ENCODE measurements at regions of chr1 and their contacts with region 1.

Region 1: GRCh38 chr1:196608390-196609369 is at the start of gene KCNT2:
- DNase-seq: peak in 1 of 2 experiments; percentile 15
- H3K4me3 ChIP-seq: no peak within 1 kb of the TSS; the same call in 1 of the 2 replicates
- H3K27ac ChIP-seq: no peak within 1 kb of the TSS
- H3K4me1 ChIP-seq: no peaks in the 10 kb centered on the region
- H3K27me3 ChIP-seq: no peaks in the 10 kb centered on the region
- CTCF ChIP-seq: no peak
- total RNA-seq, gene KCNT2: 0.53 and 0.90 TPM in 2 replicates

Region 2: DNA sequence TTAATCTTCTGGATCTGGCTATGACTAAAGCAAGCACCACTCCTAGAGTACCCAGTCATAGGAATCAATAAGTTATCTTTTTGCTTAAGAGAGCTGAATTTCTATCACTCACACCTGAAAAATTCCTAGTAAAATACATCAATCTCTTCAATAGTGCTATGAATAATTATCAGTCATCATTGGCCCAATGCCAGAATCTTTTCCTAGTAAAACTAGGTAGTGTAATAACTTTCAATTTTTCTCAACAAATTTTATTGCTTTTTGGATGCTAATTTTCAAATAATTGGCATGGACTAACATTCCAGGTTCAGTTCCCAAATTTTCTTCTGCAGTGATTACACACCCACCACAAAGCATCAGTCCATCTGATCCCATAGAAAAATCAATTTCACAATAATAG is 13.2 kb after region 1 on chr1:
- CTCF ChIA-PET with region 1: no interaction called
- POLR2A ChIA-PET with region 1: interaction called, 12 read pairs
- intact Hi-C with region 1: no loop called
- DNase-seq: no peak
- H3K4me3 ChIP-seq: no peak overlapping the region
- H3K27ac ChIP-seq: no peak overlapping the region
- H3K4me1 ChIP-seq: no peaks in the 10 kb centered on the region
- H3K27me3 ChIP-seq: no peaks in the 10 kb centered on the region
- CTCF ChIP-seq: no peak

Region 3: GRCh38 chr1:197775282-197776262 is 1166.9 kb after region 1 on chr1 and contains the start of gene DENND1B:
- CTCF ChIA-PET with region 1: no interaction called
- POLR2A ChIA-PET with region 1: no interaction called
- intact Hi-C with region 1: no loop called
- DNase-seq: peak; percentile 78 to 80
- H3K4me3 ChIP-seq: peak within 1 kb of the TSS; percentile 97
- H3K27ac ChIP-seq: peak within 1 kb of the TSS; percentile 95
- H3K4me1 ChIP-seq: peaks cover 48% of the 10 kb centered on the region
- H3K27me3 ChIP-seq: no peaks in the 10 kb centered on the region
- CTCF ChIP-seq: peak; percentile 37; the same call in 1 of the 2 replicates
- total RNA-seq, gene DENND1B: 12.7 and 14.1 TPM in 2 replicates

Measured in PC-9 (cell line).